ENCODE measurements at regions of chr5 and their contacts with region 1.

Region 1: GRCh38 chr5:154467655-154468354 is 10.2 kb downstream of the HAND1 start:
- DNase-seq: peak; percentile 78
- H3K4me3 ChIP-seq: no peak overlapping the region
- H3K27ac ChIP-seq: peak overlapping the region in 1 of 4 donors; percentile 54
- H3K4me1 ChIP-seq: peaks cover 0 to 8% (median 0%) of the 10 kb centered on the region in 4 donors
- H3K27me3 ChIP-seq: peaks cover 51% of the 10 kb centered on the region
- CTCF ChIP-seq: peak; percentile 75 to 95 (median 91)
- EP300 ChIP-seq: no peak
- POLR2A ChIP-seq: no peak

Region 2: DNA sequence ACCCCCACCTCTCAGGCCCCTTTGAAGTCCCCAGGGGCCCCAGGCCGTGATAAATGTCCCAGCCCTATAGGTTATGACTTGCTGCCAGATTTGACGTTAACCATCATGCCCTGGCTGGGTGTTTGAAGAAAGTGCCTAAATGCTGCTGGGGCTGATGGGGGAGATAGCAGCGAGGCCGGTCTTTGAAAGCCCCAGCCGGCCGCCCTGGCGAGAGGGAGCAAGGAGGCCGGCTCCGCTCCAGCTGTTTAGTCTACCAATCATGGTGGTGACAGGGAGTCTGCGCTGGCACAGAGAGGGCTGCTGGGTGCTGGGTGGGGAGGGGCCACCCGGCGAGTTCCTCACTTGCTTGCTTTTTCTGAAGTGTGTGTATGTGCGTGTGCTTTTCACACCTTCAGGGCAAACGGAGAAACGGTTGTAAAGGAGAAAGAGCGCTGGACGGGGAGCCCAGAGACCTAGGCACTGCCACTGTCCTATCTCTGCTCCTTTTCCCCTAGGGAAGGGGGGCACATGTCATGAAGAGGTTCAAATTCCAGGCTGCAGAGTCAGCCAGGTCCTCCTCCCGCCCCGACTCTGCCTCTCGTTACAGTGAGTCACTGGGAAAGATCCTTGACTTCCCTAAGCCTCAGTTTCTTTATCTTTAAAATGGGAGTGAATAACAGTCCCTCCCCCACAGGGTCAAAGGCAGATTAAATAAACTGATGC is 136.3 kb after region 1 on chr5:
- in situ Hi-C with region 1: loop called (anchors 5 to 10 kb)
- intact Hi-C with region 1: no loop called
- DNase-seq: peak; percentile 14
- H3K4me3 ChIP-seq: no peak overlapping the region
- H3K27ac ChIP-seq: peak overlapping the region in 3 of 4 donors; percentile 7 to 28 (median 17)
- H3K4me1 ChIP-seq: peaks cover 0 to 5% (median 4%) of the 10 kb centered on the region in 4 donors
- H3K27me3 ChIP-seq: peaks cover 39% of the 10 kb centered on the region
- CTCF ChIP-seq: no peak
- EP300 ChIP-seq: no peak
- POLR2A ChIP-seq: no peak

Region 3: GRCh38 chr5:154610321-154611154 is 142.7 kb after region 1 on chr5:
- in situ Hi-C with region 1: loop called (anchors 5 to 10 kb)
- intact Hi-C with region 1: loop called (anchors 2 kb)
- DNase-seq: peak; percentile 75
- H3K4me3 ChIP-seq: peak overlapping the region in 3 of 4 donors; percentile 0 to 38 (median 32)
- H3K27ac ChIP-seq: no peak overlapping the region
- H3K4me1 ChIP-seq: peaks cover 9 to 17% (median 14%) of the 10 kb centered on the region in 4 donors
- H3K27me3 ChIP-seq: peaks cover 69% of the 10 kb centered on the region
- CTCF ChIP-seq: peak; percentile 78 to 87 (median 84)
- EP300 ChIP-seq: no peak
- POLR2A ChIP-seq: no peak

Region 4: GRCh38 chr5:154811653-154812365 is 344.0 kb after region 1 on chr5:
- in situ Hi-C with region 1: loop called in 1 of 4 experiments (anchors 25 kb)
- intact Hi-C with region 1: no loop called
- DNase-seq: peak; percentile 62
- H3K4me3 ChIP-seq: no peak overlapping the region
- H3K27ac ChIP-seq: no peak overlapping the region
- H3K4me1 ChIP-seq: peaks cover 0 to 3% (median 0%) of the 10 kb centered on the region in 4 donors
- H3K27me3 ChIP-seq: no peaks in the 10 kb centered on the region
- CTCF ChIP-seq: peak; percentile 89 to 96 (median 89)
- EP300 ChIP-seq: no peak
- POLR2A ChIP-seq: no peak

Measured in transverse colon (tissue), 4 donors.